ENCODE measurements at regions of chr1 and their contacts with region 1.

Region 1: GRCh38 chr1:154809436-154810413 is 60.4 kb downstream of the KCNN3 start:
- DNase-seq: peak; percentile 45 to 78 (median 74)
- H3K4me3 ChIP-seq: no peak overlapping the region
- H3K27ac ChIP-seq: no peak overlapping the region
- H3K4me1 ChIP-seq: peaks cover 0 to 32% (median 29%) of the 10 kb centered on the region in 4 experiments
- H3K27me3 ChIP-seq: no peaks in the 10 kb centered on the region

Region 2: DNA sequence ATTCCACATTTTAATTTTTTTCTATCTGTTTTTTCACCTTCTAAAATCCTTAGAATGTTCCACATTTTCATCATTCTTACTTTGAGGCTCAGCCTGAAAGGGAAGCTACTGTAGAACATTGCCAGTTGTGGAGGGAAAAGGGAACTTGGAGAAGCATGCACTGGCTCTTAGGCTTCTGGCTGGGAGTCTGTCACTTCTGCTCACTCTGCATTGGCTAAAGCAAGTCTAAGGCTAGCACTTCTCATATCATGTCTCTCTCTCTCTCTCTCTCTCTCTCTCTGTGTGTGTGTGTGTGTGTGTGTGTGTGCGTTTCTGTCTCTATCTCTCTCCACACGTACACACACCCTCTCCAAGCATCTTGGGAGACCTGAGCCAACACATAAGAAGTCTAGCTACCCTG is 152.2 kb before region 1 on chr1:
- CTCF ChIA-PET with region 1: no interaction called
- POLR2A ChIA-PET with region 1: no interaction called
- DNase-seq: peak in 2 of 3 donors; percentile 48 to 60
- H3K4me3 ChIP-seq: no peak overlapping the region
- H3K27ac ChIP-seq: no peak overlapping the region
- H3K4me1 ChIP-seq: peaks cover 0 to 6% (median 0%) of the 10 kb centered on the region in 4 experiments
- H3K27me3 ChIP-seq: no peaks in the 10 kb centered on the region

Region 3: DNA sequence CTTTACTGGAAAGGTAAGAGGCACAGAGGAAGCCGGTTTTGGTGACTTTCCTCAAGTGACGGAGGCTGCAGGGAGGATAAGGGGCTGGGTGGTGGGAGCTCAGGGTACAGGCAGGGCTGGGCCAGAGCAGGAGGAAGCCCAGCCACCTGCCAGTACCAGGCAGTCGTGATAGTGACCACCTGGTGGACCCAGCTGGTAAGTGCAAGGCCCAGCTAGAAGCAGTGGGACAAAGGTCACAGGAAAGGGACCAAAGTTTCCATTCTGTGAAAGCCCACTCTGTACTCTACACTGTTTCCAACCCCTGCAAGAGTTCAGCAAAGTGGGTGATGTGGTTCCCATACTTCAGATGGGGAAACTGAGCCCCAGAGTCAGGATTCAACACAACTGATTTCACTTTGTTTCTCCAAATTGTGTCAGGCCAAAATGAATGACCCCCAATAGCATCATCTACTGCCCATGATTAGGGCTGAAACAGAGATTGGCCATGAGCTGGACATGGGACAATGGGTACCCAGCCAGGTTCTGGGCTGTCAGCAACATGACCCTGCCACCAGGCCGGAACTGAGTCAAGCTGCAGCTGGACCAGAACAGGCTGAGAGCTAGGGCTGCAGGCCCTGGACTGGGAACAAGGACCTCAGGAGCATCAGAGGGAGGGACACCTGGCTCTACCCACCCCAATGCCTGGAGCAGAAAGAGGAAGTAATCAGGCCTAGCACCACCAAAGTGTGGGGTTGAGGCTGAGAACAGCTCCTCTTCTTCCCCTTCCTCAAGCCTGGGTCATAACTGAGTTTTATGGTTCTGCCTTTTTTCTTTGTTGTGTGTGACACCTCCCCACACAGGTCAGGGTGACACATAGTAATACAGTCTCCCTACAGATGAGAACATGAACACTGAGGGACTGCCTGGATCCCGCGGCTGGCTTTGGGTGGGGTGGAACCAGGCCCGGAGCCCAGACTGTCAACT is 10.2 kb after region 1 on chr1:
- CTCF ChIA-PET with region 1: interaction called, 20 read pairs
- POLR2A ChIA-PET with region 1: no interaction called
- DNase-seq: peak; percentile 33 to 80 (median 78)
- H3K4me3 ChIP-seq: no peak overlapping the region
- H3K27ac ChIP-seq: no peak overlapping the region
- H3K4me1 ChIP-seq: peaks cover 0 to 7% (median 4%) of the 10 kb centered on the region in 4 experiments
- H3K27me3 ChIP-seq: no peaks in the 10 kb centered on the region